IMR-90 (cell line): ENCODE measurements at regions of chr1 and their contacts with region 1.

Region 1: GRCh38 chr1:169348383-169349036 is 19.1 kb downstream of the NME7 start:
- DNase-seq: peak; percentile 68
- ATAC-seq: peak; percentile 62; the same call in 1 of the 2 replicates
- H3K4me3 ChIP-seq: no peak overlapping the region
- H3K27ac ChIP-seq: no peak overlapping the region
- H3K4me1 ChIP-seq: no peaks in the 10 kb centered on the region
- H3K27me3 ChIP-seq: no peaks in the 10 kb centered on the region
- CTCF ChIP-seq: peak; percentile 86
- POLR2A ChIP-seq: no peak
- RAD21 ChIP-seq: peak; percentile 90

Region 2: GRCh38 chr1:168637350-168637991 is 711.0 kb before region 1 on chr1:
- CTCF ChIA-PET with region 1: no interaction called
- POLR2A ChIA-PET with region 1: no interaction called
- dilution Hi-C with region 1: no loop called
- in situ Hi-C with region 1: no loop called
- intact Hi-C with region 1: loop called (anchors 10 kb)
- DNase-seq: peak; percentile 38
- ATAC-seq: peak; percentile 21; the same call in 1 of the 2 replicates
- H3K4me3 ChIP-seq: no peak overlapping the region
- H3K27ac ChIP-seq: no peak overlapping the region
- H3K4me1 ChIP-seq: no peaks in the 10 kb centered on the region
- H3K27me3 ChIP-seq: no peaks in the 10 kb centered on the region
- CTCF ChIP-seq: peak; percentile 52
- POLR2A ChIP-seq: no peak
- RAD21 ChIP-seq: peak; percentile 29; the same call in 1 of the 2 replicates

Region 3: GRCh38 chr1:169513208-169513607 is 164.7 kb after region 1 on chr1:
- CTCF ChIA-PET with region 1: no interaction called
- POLR2A ChIA-PET with region 1: no interaction called
- dilution Hi-C with region 1: no loop called
- in situ Hi-C with region 1: no loop called
- intact Hi-C with region 1: no loop called
- DNase-seq: no peak
- ATAC-seq: no peak
- H3K4me3 ChIP-seq: no peak overlapping the region
- H3K27ac ChIP-seq: no peak overlapping the region
- H3K4me1 ChIP-seq: no peaks in the 10 kb centered on the region
- H3K27me3 ChIP-seq: no peaks in the 10 kb centered on the region; the same call in 1 of the 2 replicates
- CTCF ChIP-seq: no peak
- POLR2A ChIP-seq: no peak
- RAD21 ChIP-seq: no peak

Region 4: DNA sequence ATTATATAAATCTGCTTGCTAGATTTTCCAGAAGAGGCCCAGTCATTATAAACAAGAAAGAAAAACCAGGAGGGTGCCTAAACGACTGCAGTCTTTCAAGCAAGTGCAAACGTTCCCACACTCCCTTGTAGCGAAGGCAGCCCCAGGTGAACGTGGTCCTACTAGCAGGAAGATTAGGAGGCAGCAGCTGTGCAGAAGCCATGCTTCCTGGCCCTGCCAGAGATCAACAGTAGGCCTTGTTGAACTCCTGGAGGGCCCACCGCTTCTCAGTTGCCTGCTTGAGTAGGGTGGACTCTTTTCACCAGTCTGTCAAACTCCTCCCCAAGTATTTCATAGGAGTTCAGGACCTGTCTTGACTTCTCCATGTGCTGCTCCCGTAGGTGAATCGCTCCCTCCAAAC is 1020.5 kb after region 1 on chr1:
- CTCF ChIA-PET with region 1: no interaction called
- POLR2A ChIA-PET with region 1: no interaction called
- dilution Hi-C with region 1: no loop called
- in situ Hi-C with region 1: no loop called
- intact Hi-C with region 1: no loop called
- DNase-seq: no peak
- ATAC-seq: no peak
- H3K4me3 ChIP-seq: no peak overlapping the region
- H3K27ac ChIP-seq: no peak overlapping the region
- H3K4me1 ChIP-seq: no peaks in the 10 kb centered on the region
- H3K27me3 ChIP-seq: no peaks in the 10 kb centered on the region
- CTCF ChIP-seq: no peak
- POLR2A ChIP-seq: no peak
- RAD21 ChIP-seq: no peak